H1 (cell line): ENCODE measurements at regions of chr15 and their contacts with region 1.

Region 1: GRCh38 chr15:80789296-80789695 is 10.1 kb downstream of the CEMIP start:
- DNase-seq: no peak
- H3K4me3 ChIP-seq: no peak overlapping the region
- H3K27ac ChIP-seq: no peak overlapping the region
- H3K4me1 ChIP-seq: no peaks in the 10 kb centered on the region
- H3K27me3 ChIP-seq: no peaks in the 10 kb centered on the region; a peak in 1 of 7 replicates
- CTCF ChIP-seq: no peak
- EP300 ChIP-seq: no peak
- POLR2A ChIP-seq: no peak
- RAD21 ChIP-seq: no peak

Region 2: DNA sequence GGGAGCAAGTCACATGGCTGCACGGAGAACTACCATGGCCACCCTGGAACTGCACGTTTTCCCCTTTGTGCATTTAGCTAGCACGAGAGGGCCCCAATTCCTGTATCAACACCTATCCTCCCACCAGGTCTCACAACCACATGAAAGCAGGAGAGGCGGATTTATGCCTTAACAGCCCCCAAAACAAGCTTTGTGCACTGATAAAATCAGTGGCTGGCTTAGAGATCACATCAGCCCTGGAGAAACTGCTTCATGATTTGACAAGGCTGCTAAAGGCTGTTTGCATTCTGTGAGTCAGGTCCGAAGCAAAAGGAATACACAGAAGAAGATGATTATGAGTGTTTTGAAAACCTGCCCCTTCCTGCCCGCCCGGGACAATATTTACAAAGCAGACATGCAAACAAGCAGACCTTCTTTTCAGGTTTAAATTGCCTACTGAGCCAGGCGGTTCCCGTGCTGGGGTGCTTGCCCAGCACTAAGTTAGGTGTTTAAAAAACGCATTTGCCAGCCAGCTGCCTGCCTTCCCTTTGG is 15.7 kb after region 1 on chr15:
- CTCF ChIA-PET with region 1: interaction called, 31 read pairs
- POLR2A ChIA-PET with region 1: no interaction called
- DNase-seq: no peak
- H3K4me3 ChIP-seq: no peak overlapping the region
- H3K27ac ChIP-seq: no peak overlapping the region
- H3K4me1 ChIP-seq: peaks cover 0 to 6% (median 3%) of the 10 kb centered on the region in 4 experiments; a peak in 3 of 7 replicates
- H3K27me3 ChIP-seq: peaks cover 0 to 2% (median 0%) of the 10 kb centered on the region in 4 experiments; a peak in 2 of 7 replicates
- CTCF ChIP-seq: no peak
- EP300 ChIP-seq: no peak
- POLR2A ChIP-seq: no peak
- RAD21 ChIP-seq: no peak

Region 3: DNA sequence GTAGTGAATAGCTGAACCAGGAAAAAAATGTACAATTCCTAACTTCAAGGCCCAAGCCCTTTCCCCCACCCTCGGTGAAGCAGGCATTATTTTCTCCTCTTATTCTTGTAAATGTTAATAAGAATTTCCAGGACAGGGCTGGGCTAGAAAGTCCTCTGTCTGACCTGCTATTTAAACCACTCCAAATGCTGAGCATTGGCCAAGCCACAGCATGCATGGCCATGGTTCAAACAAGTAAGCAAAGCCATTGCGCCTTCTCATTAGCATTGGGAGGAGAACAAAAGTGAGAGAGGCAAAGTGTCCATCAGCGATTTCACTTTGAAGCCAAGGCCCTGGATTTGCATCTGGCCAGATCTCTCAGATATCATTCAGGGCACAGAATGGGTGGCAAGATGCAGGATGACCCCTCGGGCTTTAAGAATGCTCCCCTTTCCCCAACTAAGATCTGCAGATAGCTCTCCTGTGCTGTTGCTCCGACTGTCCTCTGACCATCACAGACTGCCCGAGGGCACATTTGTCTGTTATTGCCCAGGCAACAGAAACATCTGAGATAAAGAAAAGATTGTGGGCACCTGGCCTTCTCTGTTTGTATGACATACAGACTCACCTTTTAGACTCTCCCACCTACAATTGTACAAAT is 36.2 kb after region 1 on chr15:
- CTCF ChIA-PET with region 1: no interaction called
- POLR2A ChIA-PET with region 1: no interaction called
- DNase-seq: no peak
- H3K4me3 ChIP-seq: no peak overlapping the region
- H3K27ac ChIP-seq: no peak overlapping the region
- H3K4me1 ChIP-seq: peaks cover 0 to 3% (median 0%) of the 10 kb centered on the region in 4 experiments; a peak in 1 of 7 replicates
- H3K27me3 ChIP-seq: no peaks in the 10 kb centered on the region
- CTCF ChIP-seq: no peak
- EP300 ChIP-seq: no peak
- POLR2A ChIP-seq: no peak
- RAD21 ChIP-seq: no peak